ENCODE measurements at regions of chr5 and their contacts with region 1.

Region 1: GRCh38 chr5:50711273-50711672 is 44.8 kb downstream of the PARP8 start:
- DNase-seq: peak; percentile 53
- H3K4me3 Mint-ChIP-seq: peak overlapping the region; percentile 61
- H3K27ac Mint-ChIP-seq: peak overlapping the region; percentile 78
- H3K4me1 Mint-ChIP-seq: peaks cover 39% of the 10 kb centered on the region
- H3K27me3 Mint-ChIP-seq: no peaks in the 10 kb centered on the region
- CTCF ChIP-seq: no peak

Region 2: DNA sequence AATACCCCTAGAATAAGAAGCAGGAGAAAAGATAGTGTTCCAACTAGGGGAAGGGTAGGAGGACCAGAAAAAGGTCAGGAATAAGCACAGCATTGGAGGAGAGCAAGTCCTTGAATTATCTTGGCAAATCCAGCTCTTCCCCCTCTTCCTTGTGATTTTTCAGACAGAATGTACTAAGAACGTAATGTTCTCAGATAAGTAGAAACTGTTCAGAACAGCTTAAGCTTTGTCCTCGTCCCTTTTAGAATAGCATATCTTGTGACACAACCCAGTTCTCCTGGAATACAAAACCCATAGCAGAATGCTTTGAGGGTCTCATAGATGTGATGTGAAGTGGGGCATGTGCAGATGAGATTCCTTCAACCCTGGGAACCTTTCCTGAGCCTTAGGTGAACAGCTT is 367.6 kb before region 1 on chr5:
- CTCF ChIA-PET with region 1: no interaction called
- intact Hi-C with region 1: no loop called
- DNase-seq: no peak
- H3K4me3 Mint-ChIP-seq: no peak overlapping the region
- H3K27ac Mint-ChIP-seq: no peak overlapping the region
- H3K4me1 Mint-ChIP-seq: no peaks in the 10 kb centered on the region
- H3K27me3 Mint-ChIP-seq: no peaks in the 10 kb centered on the region
- CTCF ChIP-seq: no peak

Region 3: DNA sequence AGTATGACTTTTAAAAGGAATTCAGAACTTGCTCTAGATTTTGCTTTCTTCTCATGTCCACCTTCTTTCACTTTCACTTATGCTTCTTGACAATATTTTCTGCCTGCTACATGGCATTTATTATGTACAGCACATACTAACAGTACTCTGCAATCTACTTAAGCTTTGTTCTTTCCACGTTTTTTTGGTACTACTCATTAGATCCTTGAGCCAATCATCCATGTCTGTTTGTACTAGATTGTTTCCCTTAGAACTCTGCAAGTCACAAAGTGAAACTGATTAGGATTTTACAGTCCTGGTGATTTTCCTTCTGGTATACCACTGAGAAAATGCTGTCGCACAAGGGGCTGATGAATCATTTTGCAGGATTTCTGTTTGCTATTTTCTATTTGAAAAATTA is 33.5 kb after region 1 on chr5:
- CTCF ChIA-PET with region 1: no interaction called
- intact Hi-C with region 1: loop called (anchors 5 kb)
- DNase-seq: no peak
- H3K4me3 Mint-ChIP-seq: peak overlapping the region; percentile 57
- H3K27ac Mint-ChIP-seq: peak overlapping the region; percentile 24
- H3K4me1 Mint-ChIP-seq: peaks cover 44% of the 10 kb centered on the region
- H3K27me3 Mint-ChIP-seq: no peaks in the 10 kb centered on the region
- CTCF ChIP-seq: no peak

Region 4: DNA sequence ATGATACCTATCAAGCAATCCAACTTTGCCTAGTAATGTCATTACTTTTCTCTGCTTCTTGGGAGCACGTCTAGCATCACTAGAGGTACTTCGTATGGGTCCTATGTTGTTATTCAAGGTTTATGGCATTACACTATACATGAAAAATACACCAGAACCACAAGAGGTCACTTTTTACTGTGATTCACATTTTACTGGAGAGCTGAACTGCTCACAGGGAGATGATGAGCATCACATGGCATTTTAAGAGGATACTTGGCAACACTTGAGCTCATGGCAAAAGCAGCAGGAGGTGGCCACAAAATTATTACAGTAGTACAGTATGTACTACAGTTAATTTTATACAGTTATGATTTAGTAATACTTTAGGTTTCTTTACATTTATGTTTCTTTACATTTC is 178.5 kb after region 1 on chr5:
- CTCF ChIA-PET with region 1: no interaction called
- intact Hi-C with region 1: no loop called
- DNase-seq: no peak
- H3K4me3 Mint-ChIP-seq: no peak overlapping the region
- H3K27ac Mint-ChIP-seq: no peak overlapping the region
- H3K4me1 Mint-ChIP-seq: no peaks in the 10 kb centered on the region
- H3K27me3 Mint-ChIP-seq: peaks cover 23% of the 10 kb centered on the region
- CTCF ChIP-seq: no peak

Measured in Calu3 (cell line).